ENCODE measurements at regions of chr14 and their contacts with region 1.

Region 1: GRCh38 chr14:69129264-69129880 is 23.5 kb downstream of the DCAF5 start:
- DNase-seq: peak; percentile 50 to 92
- ATAC-seq: peak; percentile 84 to 90 (median 87)
- H3K4me3 ChIP-seq: no peak overlapping the region
- H3K4me3 Mint-ChIP-seq: no peak overlapping the region
- H3K27ac ChIP-seq: peak overlapping the region; percentile 12
- H3K27ac Mint-ChIP-seq: peak overlapping the region; percentile 34 to 85
- H3K4me1 ChIP-seq: peaks cover 8% of the 10 kb centered on the region
- H3K4me1 Mint-ChIP-seq: peaks cover 88% of the 10 kb centered on the region in 2 donors
- H3K27me3 ChIP-seq: no peaks in the 10 kb centered on the region
- H3K27me3 Mint-ChIP-seq: no peaks in the 10 kb centered on the region
- CTCF ChIP-seq: peak; percentile 92

Region 2: GRCh38 chr14:69191340-69192111 is 62.2 kb after region 1 on chr14 and contains the start of gene EXD2:
- intact Hi-C with region 1: loop called (anchors 1 kb)
- DNase-seq: peak; percentile 28 to 83
- ATAC-seq: peak; percentile 75 to 77 (median 76)
- H3K4me3 ChIP-seq: peak within 1 kb of the TSS; percentile 57
- H3K4me3 Mint-ChIP-seq: peak within 1 kb of the TSS; percentile 96
- H3K27ac ChIP-seq: peak within 1 kb of the TSS; percentile 28
- H3K27ac Mint-ChIP-seq: peak within 1 kb of the TSS; percentile 58 to 84
- H3K4me1 ChIP-seq: peaks cover 9% of the 10 kb centered on the region
- H3K4me1 Mint-ChIP-seq: peaks cover 16 to 17% of the 10 kb centered on the region in 2 donors
- H3K27me3 ChIP-seq: no peaks in the 10 kb centered on the region
- H3K27me3 Mint-ChIP-seq: peaks cover 0 to 13% of the 10 kb centered on the region in 2 donors
- CTCF ChIP-seq: no peak
- total RNA-seq, gene EXD2: 2.0 to 4.9 (median 2.9) TPM

Region 3: DNA sequence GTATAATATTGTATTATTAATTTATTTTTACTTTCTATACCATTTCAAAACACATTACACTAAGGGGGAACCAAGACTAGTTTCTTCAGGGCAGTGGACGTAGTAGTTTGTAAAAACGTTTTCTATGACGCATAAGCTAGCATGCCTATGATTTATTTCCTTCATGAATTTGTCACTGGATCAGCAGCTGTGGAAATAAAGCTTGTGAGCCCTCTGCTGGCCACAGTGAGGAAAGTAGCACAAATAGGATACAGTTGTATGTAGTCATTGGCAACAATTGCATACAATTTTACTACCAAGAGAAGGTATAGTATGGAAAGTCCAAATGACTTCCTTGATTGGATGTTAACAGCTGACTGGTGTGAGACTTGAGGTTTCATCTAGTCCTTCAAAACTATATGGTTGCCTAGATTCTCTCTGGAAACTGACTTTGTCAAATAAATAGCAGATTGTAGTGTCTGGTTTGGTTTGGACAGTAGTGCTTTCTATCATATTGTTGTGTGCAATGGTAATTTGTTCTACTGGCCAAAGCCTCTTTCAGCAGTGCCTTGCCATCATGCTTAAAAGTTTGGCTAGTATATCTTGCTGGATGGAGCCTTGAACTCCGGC is 330.8 kb after region 1 on chr14:
- intact Hi-C with region 1: loop called (anchors 1 kb)
- DNase-seq: peak in 1 of 2 donors; percentile 73
- ATAC-seq: peak; percentile 67 to 84 (median 82)
- H3K4me3 ChIP-seq: no peak overlapping the region
- H3K4me3 Mint-ChIP-seq: no peak overlapping the region
- H3K27ac ChIP-seq: no peak overlapping the region
- H3K27ac Mint-ChIP-seq: peak overlapping the region in 1 of 2 donors; percentile 38
- H3K4me1 ChIP-seq: no peaks in the 10 kb centered on the region
- H3K4me1 Mint-ChIP-seq: no peaks in the 10 kb centered on the region
- H3K27me3 ChIP-seq: no peaks in the 10 kb centered on the region
- H3K27me3 Mint-ChIP-seq: no peaks in the 10 kb centered on the region
- CTCF ChIP-seq: peak; percentile 62

Measured in natural killer cell (primary cell).